Psoas muscle (tissue), 8 donors: ENCODE measurements at regions of chr9 and their contacts with region 1.

Region 1: GRCh38 chr9:34637356-34638137 is at the start of gene SIGMAR1:
- DNase-seq: peak; percentile 96 to 97
- ATAC-seq: peak; percentile 95 to 97 (median 96)
- H3K4me3 ChIP-seq: peak within 1 kb of the TSS; percentile 94
- H3K27ac ChIP-seq: peak within 1 kb of the TSS; percentile 91
- H3K4me1 ChIP-seq: peaks cover 26% of the 10 kb centered on the region
- H3K27me3 ChIP-seq: no peaks in the 10 kb centered on the region
- CTCF ChIP-seq: no peak
- total RNA-seq, gene SIGMAR1: 13.0 to 16.5 (median 13.8) TPM

Region 2: DNA sequence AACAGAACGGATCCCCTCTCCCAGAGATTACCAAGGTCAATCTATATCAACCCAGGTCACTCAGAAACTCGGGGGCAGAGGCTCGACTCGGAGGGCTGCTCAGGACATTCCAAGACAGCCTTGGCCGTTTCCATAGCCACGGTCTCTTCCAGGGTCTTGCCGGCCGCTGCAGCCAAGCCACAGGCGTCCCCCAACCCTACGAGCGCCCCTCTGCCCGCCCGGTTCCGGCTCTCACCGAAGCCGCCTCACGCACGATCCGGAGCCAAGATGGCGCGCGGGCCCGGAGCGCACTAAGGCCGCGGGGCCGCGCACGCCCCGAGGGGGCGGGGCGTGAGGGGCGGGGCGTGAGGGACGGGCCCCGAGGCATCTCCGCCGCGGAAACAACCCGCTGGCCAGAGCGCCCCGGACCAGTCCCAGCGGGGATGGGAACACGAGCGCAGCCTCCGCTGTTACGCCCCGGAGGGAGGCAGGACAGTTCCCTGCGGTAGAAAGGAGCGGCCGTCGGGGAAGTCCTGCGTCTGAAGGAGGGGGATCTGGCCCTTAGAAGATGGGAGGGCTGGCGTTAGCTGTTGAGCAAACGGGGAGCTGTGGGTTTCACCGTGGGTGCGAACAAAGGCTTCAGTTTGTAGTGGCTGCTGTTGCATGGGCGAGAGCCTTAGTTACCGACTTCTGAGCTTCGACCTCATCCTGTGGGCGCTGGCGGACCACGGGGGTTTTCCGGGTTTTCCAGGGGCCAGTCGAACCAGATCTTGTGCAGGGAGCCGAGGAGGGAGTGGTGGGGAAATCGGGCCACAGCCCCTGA is 25.5 kb before region 1 on chr9 and contains the start of gene RPP25L:
- intact Hi-C with region 1: loop called (anchors 1 kb)
- DNase-seq: peak; percentile 90 to 91
- ATAC-seq: peak; percentile 92 to 96 (median 95)
- H3K4me3 ChIP-seq: peak within 1 kb of the TSS; percentile 73
- H3K27ac ChIP-seq: peak within 1 kb of the TSS; percentile 84
- H3K4me1 ChIP-seq: peaks cover 26% of the 10 kb centered on the region
- H3K27me3 ChIP-seq: no peaks in the 10 kb centered on the region
- CTCF ChIP-seq: no peak
- total RNA-seq, gene RPP25L: 63.1 to 84.7 (median 68.3) TPM